ENCODE measurements at regions of chr14 and their contacts with region 1.

Region 1: DNA sequence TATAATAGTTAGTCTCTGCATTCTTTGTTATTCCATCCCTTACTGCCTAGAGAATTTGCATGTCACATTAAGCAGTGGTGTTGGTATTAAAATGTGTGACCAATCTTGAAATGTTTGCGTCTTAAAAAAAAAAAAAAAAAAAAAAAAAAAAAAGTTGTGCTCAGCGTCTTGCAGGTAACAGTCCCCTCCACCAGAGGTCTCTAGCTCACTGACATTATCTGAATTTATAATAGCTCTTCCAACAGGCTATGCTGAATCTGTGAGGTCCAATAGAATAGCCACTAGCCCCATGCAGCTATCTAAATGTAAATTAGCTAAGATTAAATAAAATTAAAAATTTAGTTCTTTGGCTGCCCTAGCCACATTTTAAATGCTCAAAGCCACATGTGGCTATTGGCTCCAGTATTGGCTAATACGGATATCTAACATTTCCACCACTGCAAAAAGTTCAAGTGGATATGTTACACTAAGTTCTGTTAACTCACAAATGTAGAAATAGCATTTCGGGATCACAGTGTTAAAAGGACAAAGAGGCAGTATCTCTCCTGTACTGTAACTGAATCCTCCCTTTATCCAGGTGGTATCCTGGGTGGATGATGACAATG is 28.7 kb downstream of the NKX2-8 start:
- DNase-seq: peak in 1 of 2 experiments; percentile 48
- H3K4me3 ChIP-seq: no peak overlapping the region
- H3K4me3 Mint-ChIP-seq: no peak overlapping the region
- H3K27ac Mint-ChIP-seq: no peak overlapping the region
- H3K4me1 ChIP-seq: no peaks in the 10 kb centered on the region
- H3K4me1 Mint-ChIP-seq: no peaks in the 10 kb centered on the region
- H3K27me3 ChIP-seq: no peaks in the 10 kb centered on the region
- H3K27me3 Mint-ChIP-seq: no peaks in the 10 kb centered on the region
- CTCF ChIP-seq: peak; percentile 65 to 80

Region 2: GRCh38 chr14:35695647-35696046 is 858.1 kb before region 1 on chr14:
- CTCF ChIA-PET with region 1: no interaction called
- POLR2A ChIA-PET with region 1: no interaction called
- intact Hi-C with region 1: no loop called
- DNase-seq: no peak
- H3K4me3 ChIP-seq: no peak overlapping the region
- H3K4me3 Mint-ChIP-seq: no peak overlapping the region
- H3K27ac Mint-ChIP-seq: no peak overlapping the region
- H3K4me1 ChIP-seq: no peaks in the 10 kb centered on the region
- H3K4me1 Mint-ChIP-seq: no peaks in the 10 kb centered on the region
- H3K27me3 ChIP-seq: no peaks in the 10 kb centered on the region
- H3K27me3 Mint-ChIP-seq: no peaks in the 10 kb centered on the region
- CTCF ChIP-seq: no peak

Region 3: GRCh38 chr14:36313206-36313605 is 240.6 kb before region 1 on chr14:
- CTCF ChIA-PET with region 1: no interaction called
- POLR2A ChIA-PET with region 1: no interaction called
- intact Hi-C with region 1: no loop called
- DNase-seq: no peak
- H3K4me3 ChIP-seq: no peak overlapping the region
- H3K4me3 Mint-ChIP-seq: no peak overlapping the region
- H3K27ac Mint-ChIP-seq: no peak overlapping the region
- H3K4me1 ChIP-seq: no peaks in the 10 kb centered on the region; the same call in 1 of the 2 replicates
- H3K4me1 Mint-ChIP-seq: no peaks in the 10 kb centered on the region
- H3K27me3 ChIP-seq: no peaks in the 10 kb centered on the region
- H3K27me3 Mint-ChIP-seq: no peaks in the 10 kb centered on the region
- CTCF ChIP-seq: no peak

Region 4: DNA sequence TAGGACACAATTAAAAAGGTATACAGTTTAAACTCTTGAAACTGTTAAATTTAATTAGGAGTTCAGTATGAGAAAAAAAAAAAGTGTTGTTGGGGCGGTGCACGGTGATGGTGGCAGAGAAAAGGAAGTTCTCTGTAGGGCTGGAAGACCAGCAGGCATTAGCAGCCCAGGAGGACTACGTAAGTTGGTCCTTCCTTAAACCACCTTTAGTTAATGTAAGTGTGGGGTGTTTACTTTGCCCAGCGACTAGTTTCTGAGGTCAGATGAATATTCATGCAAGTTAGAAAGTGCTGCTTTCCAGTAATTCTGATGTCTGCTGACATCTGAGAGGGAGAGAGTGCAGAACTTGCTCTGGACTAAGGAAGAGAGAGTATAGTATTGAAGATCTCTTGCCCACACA is 88.6 kb before region 1 on chr14:
- CTCF ChIA-PET with region 1: no interaction called
- POLR2A ChIA-PET with region 1: no interaction called
- intact Hi-C with region 1: no loop called
- DNase-seq: no peak
- H3K4me3 ChIP-seq: no peak overlapping the region
- H3K4me3 Mint-ChIP-seq: no peak overlapping the region
- H3K27ac Mint-ChIP-seq: no peak overlapping the region
- H3K4me1 ChIP-seq: no peaks in the 10 kb centered on the region
- H3K4me1 Mint-ChIP-seq: no peaks in the 10 kb centered on the region
- H3K27me3 ChIP-seq: no peaks in the 10 kb centered on the region; the same call in 1 of the 2 replicates
- H3K27me3 Mint-ChIP-seq: no peaks in the 10 kb centered on the region
- CTCF ChIP-seq: no peak

Region 5: GRCh38 chr14:36591482-36591881 is 37.7 kb after region 1 on chr14:
- CTCF ChIA-PET with region 1: interaction called, 15 read pairs
- POLR2A ChIA-PET with region 1: no interaction called
- intact Hi-C with region 1: no loop called
- DNase-seq: no peak
- H3K4me3 ChIP-seq: no peak overlapping the region
- H3K4me3 Mint-ChIP-seq: no peak overlapping the region
- H3K27ac Mint-ChIP-seq: no peak overlapping the region
- H3K4me1 ChIP-seq: no peaks in the 10 kb centered on the region
- H3K4me1 Mint-ChIP-seq: no peaks in the 10 kb centered on the region
- H3K27me3 ChIP-seq: peaks cover 4% of the 10 kb centered on the region
- H3K27me3 Mint-ChIP-seq: peaks cover 37% of the 10 kb centered on the region
- CTCF ChIP-seq: no peak

Region 6: GRCh38 chr14:36604757-36605505 is 51.2 kb after region 1 on chr14:
- CTCF ChIA-PET with region 1: interaction called, 90 read pairs
- POLR2A ChIA-PET with region 1: no interaction called
- intact Hi-C with region 1: loop called (anchors 1 kb)
- DNase-seq: peak; percentile 69 to 80
- H3K4me3 ChIP-seq: no peak overlapping the region
- H3K4me3 Mint-ChIP-seq: no peak overlapping the region
- H3K27ac Mint-ChIP-seq: no peak overlapping the region
- H3K4me1 ChIP-seq: no peaks in the 10 kb centered on the region
- H3K4me1 Mint-ChIP-seq: peaks cover 8% of the 10 kb centered on the region
- H3K27me3 ChIP-seq: no peaks in the 10 kb centered on the region
- H3K27me3 Mint-ChIP-seq: no peaks in the 10 kb centered on the region
- CTCF ChIP-seq: peak; percentile 71 to 84

Measured in Caco-2 (cell line).